ENCODE measurements at regions of chr3 and their contacts with region 1.

Region 1: GRCh38 chr3:49839193-49839809 is 17.1 kb downstream of the TRAIP start:
- DNase-seq: peak; percentile 78
- ATAC-seq: peak; percentile 54
- H3K4me3 Mint-ChIP-seq: no peak overlapping the region
- H3K27ac Mint-ChIP-seq: no peak overlapping the region
- H3K4me1 Mint-ChIP-seq: peaks cover 17% of the 10 kb centered on the region
- H3K27me3 Mint-ChIP-seq: no peaks in the 10 kb centered on the region
- CTCF ChIP-seq: peak; percentile 65

Region 2: GRCh38 chr3:49723628-49724551 is 115.4 kb before region 1 on chr3 and contains the start of gene GMPPB:
- CTCF ChIA-PET with region 1: interaction called, 21 read pairs
- POLR2A ChIA-PET with region 1: no interaction called
- DNase-seq: peak; percentile 97
- ATAC-seq: peak; percentile 79
- H3K4me3 Mint-ChIP-seq: peak within 1 kb of the TSS; percentile 91
- H3K27ac Mint-ChIP-seq: peak within 1 kb of the TSS; percentile 98
- H3K4me1 Mint-ChIP-seq: peaks cover 11% of the 10 kb centered on the region
- H3K27me3 Mint-ChIP-seq: no peaks in the 10 kb centered on the region
- CTCF ChIP-seq: no peak
- total RNA-seq, gene GMPPB: 23.7 to 28.7 TPM (median 28.0 TPM) in 3 replicates

Region 3: DNA sequence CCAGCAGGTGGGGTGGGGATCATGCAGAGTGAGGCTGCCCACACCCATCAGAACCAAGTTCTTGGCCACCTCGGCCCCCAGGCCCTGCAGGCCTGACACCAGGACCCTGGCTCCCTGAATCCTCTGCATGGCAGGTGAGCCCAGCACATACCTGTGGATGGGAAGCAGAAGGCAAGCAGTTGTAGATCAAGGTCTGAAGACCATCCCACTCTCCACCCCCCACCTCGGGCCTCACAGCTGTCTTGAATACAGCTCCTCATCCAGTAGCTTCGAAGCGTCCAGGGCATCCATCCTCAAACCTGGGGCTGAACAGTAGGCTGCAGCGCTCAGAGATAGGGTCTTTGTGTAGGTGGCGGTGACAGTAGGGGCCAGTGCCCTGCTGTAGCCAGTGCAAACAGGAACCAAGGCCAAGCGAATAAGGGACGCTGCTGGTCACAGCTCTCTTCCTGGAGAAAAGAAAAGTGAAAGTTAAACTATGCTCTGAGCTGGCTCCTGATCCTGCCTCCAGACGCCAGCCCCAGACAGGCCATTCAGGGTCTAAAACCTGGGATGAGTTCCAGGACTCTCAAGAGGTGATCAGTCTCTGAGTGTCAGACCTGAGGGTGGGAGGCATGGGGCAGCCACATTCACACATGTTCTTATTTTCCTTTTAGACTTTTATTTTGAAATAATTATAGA is 25.7 kb before region 1 on chr3 and contains the start of gene UBA7:
- CTCF ChIA-PET with region 1: interaction called, 11 read pairs
- POLR2A ChIA-PET with region 1: no interaction called
- DNase-seq: no peak
- ATAC-seq: no peak
- H3K4me3 Mint-ChIP-seq: no peak within 1 kb of the TSS
- H3K27ac Mint-ChIP-seq: no peak within 1 kb of the TSS
- H3K4me1 Mint-ChIP-seq: no peaks in the 10 kb centered on the region
- H3K27me3 Mint-ChIP-seq: no peaks in the 10 kb centered on the region
- CTCF ChIP-seq: no peak
- total RNA-seq, gene UBA7: 1.2 to 1.9 TPM (median 1.6 TPM) in 3 replicates

Region 4: GRCh38 chr3:49867871-49868321 is 28.6 kb after region 1 on chr3:
- CTCF ChIA-PET with region 1: interaction called, 15 read pairs
- POLR2A ChIA-PET with region 1: interaction called, 3 read pairs
- DNase-seq: peak; percentile 78
- ATAC-seq: peak; percentile 56
- H3K4me3 Mint-ChIP-seq: peak overlapping the region; percentile 65
- H3K27ac Mint-ChIP-seq: peak overlapping the region; percentile 70; the same call in 1 of the 2 replicates
- H3K4me1 Mint-ChIP-seq: peaks cover 44% of the 10 kb centered on the region
- H3K27me3 Mint-ChIP-seq: peaks cover 4% of the 10 kb centered on the region
- CTCF ChIP-seq: no peak

Region 5: GRCh38 chr3:49906004-49906743 is 66.9 kb after region 1 on chr3:
- CTCF ChIA-PET with region 1: interaction called, 103 read pairs
- POLR2A ChIA-PET with region 1: no interaction called
- DNase-seq: peak; percentile 68
- ATAC-seq: peak; percentile 14
- H3K4me3 Mint-ChIP-seq: peak overlapping the region; percentile 32
- H3K27ac Mint-ChIP-seq: peak overlapping the region; percentile 73
- H3K4me1 Mint-ChIP-seq: peaks cover 47% of the 10 kb centered on the region
- H3K27me3 Mint-ChIP-seq: peaks cover 11% of the 10 kb centered on the region
- CTCF ChIP-seq: peak; percentile 36

Region 6: GRCh38 chr3:49929331-49930240 is 90.3 kb after region 1 on chr3 and contains the start of gene MON1A:
- CTCF ChIA-PET with region 1: interaction called, 17 read pairs
- POLR2A ChIA-PET with region 1: no interaction called
- DNase-seq: peak; percentile 99
- ATAC-seq: peak; percentile 87
- H3K4me3 Mint-ChIP-seq: peak within 1 kb of the TSS; percentile 90
- H3K27ac Mint-ChIP-seq: peak within 1 kb of the TSS; percentile 98
- H3K4me1 Mint-ChIP-seq: peaks cover 25% of the 10 kb centered on the region
- H3K27me3 Mint-ChIP-seq: no peaks in the 10 kb centered on the region
- CTCF ChIP-seq: no peak
- total RNA-seq, gene MON1A: 6.6 to 8.6 TPM (median 7.0 TPM) in 3 replicates